Left ventricle myocardium inferior (tissue), 1 donor: ENCODE measurements at regions of chr18 and their contacts with region 1.

Region 1: DNA sequence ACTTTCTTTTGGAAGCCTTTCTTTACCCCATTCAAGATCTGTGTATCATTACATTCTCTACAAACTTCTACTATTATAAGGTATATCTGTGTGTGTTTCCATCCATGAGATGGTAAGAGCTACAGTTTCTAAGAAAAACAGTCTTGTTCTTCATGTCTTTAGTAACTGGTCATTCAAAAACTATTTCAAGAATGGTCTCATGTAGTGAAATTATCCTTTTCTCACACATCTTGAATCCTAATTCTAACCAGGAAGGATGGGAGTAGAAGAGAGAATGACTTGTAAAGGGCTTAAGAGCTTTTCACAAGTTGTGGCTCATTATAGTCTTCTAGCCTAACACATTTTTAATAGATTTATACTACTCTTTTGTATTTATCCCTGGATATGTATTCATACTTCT is 47.3 kb downstream of the ROCK1 start:
- DNase-seq: no peak
- H3K4me3 ChIP-seq: no peak overlapping the region
- H3K27ac ChIP-seq: no peak overlapping the region
- H3K4me1 ChIP-seq: peaks cover 7% of the 10 kb centered on the region
- H3K27me3 ChIP-seq: no peaks in the 10 kb centered on the region
- CTCF ChIP-seq: no peak

Region 2: DNA sequence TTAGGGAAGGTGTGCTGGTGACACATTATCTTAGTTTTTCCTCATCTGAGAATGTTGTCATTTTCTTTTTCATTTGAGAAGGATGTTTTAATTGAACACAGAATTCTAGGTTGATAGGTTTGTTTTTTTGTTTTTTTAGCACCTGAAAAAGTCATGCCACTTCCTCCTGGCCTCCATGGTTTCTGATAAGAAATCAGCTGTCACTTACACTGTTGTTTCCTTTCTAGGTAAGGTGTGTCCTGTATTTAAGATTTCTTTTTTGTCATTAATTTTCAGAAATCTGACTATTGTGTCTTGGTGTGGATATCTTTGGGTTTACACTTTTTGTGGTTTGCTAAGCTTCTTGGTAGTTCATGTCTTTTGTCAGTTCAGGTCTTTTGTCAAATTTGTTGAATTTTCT is 52.0 kb before region 1 on chr18:
- intact Hi-C with region 1: loop called (anchors 10 kb)
- DNase-seq: no peak
- H3K4me3 ChIP-seq: no peak overlapping the region
- H3K27ac ChIP-seq: no peak overlapping the region
- H3K4me1 ChIP-seq: no peaks in the 10 kb centered on the region
- H3K27me3 ChIP-seq: no peaks in the 10 kb centered on the region
- CTCF ChIP-seq: no peak

Region 3: DNA sequence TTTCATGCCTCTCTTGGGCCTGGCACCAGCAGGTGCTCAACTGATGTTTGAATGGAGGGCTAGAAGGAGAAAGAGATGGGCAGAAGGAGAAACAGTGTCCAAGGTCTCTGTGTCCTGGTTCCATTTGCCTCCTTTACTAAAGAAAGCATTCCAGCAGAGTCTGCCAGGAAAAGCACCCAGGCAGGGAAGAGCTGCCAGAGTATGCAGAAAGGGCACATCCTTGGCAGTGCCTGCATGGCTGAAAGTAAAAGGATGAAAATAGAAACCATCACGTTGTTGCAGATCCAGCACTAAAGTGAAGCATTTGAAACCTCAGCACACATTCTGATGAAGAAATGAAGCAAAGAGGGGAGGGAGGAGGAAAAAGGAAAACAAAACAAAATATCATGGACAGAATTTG is 394.0 kb after region 1 on chr18:
- intact Hi-C with region 1: no loop called
- DNase-seq: peak; percentile 40
- H3K4me3 ChIP-seq: peak overlapping the region; percentile 32
- H3K27ac ChIP-seq: peak overlapping the region; percentile 89
- H3K4me1 ChIP-seq: peaks cover 47% of the 10 kb centered on the region
- H3K27me3 ChIP-seq: no peaks in the 10 kb centered on the region
- CTCF ChIP-seq: no peak